ENCODE measurements at regions of chr15 and their contacts with region 1.

Region 1: GRCh38 chr15:91302588-91303439 is 202.8 kb downstream of the SV2B start:
- DNase-seq: peak; percentile 29
- ATAC-seq: peak; percentile 60
- H3K4me3 Mint-ChIP-seq: no peak overlapping the region
- H3K27ac Mint-ChIP-seq: no peak overlapping the region
- H3K4me1 Mint-ChIP-seq: peaks cover 8% of the 10 kb centered on the region
- H3K27me3 Mint-ChIP-seq: peaks cover 6% of the 10 kb centered on the region

Region 2: DNA sequence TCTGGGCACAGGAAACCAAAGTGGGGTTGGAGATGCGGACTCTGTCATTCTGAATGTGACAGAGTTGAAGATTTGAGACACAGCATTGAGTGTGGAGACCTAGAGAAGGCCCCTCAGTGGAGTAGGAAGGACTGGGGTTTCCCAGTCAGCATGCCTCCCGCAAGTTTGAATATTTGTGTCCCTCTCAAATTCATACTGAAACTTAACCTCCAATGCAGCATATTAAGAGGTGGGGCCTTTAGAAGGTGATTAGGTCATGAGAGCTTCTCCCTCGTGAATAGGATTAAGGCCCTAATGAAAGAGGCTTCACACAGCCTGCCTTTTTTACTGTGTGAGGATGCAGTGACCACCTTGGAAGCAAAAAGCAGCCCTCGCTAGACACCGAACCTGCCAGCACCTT is 378.4 kb before region 1 on chr15:
- CTCF ChIA-PET with region 1: no interaction called
- POLR2A ChIA-PET with region 1: no interaction called
- intact Hi-C with region 1: no loop called
- DNase-seq: peak; percentile 41
- ATAC-seq: peak; percentile 72
- H3K4me3 Mint-ChIP-seq: no peak overlapping the region
- H3K27ac Mint-ChIP-seq: peak overlapping the region; percentile 58
- H3K4me1 Mint-ChIP-seq: peaks cover 34% of the 10 kb centered on the region
- H3K27me3 Mint-ChIP-seq: no peaks in the 10 kb centered on the region

Region 3: GRCh38 chr15:91271565-91272153 is 31.2 kb before region 1 on chr15:
- CTCF ChIA-PET with region 1: interaction called, 13 read pairs
- POLR2A ChIA-PET with region 1: no interaction called
- intact Hi-C with region 1: no loop called
- DNase-seq: peak; percentile 74
- ATAC-seq: peak; percentile 64
- H3K4me3 Mint-ChIP-seq: no peak overlapping the region
- H3K27ac Mint-ChIP-seq: no peak overlapping the region
- H3K4me1 Mint-ChIP-seq: peaks cover 2% of the 10 kb centered on the region
- H3K27me3 Mint-ChIP-seq: peaks cover 12% of the 10 kb centered on the region

Region 4: DNA sequence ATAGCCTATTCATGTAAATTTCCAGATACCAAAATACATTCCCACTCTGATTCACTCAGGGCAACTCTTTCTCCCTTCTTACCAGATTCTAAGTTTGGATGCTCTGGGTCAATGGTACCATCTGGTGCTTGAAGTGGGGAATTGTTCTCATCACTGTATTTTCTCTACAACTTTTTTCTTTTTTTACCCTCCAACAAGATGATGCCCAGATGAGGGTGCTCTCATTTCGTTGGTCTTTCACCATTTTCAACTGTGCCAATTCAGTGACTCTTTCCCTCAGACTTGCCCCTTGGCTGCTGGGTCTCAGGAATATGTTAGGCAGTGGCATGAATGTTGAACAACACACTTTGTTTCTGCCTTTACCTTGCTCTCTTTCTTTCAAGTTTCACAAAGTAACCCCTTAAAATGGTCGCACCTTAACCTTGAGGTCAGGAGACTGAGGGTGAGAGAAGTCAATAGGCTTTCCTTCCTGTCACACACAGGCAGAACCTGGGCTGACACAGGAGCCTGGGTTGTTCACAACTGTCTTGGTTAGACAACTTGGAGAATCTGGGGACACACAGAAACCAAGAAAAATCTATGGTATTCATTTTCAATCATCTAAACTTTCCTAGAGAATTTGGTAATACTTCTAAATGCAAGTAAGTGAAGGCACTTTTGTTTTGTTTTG is 220.0 kb after region 1 on chr15:
- CTCF ChIA-PET with region 1: interaction called, 3 read pairs
- POLR2A ChIA-PET with region 1: no interaction called
- intact Hi-C with region 1: loop called (anchors 1 to 10 kb)
- DNase-seq: no peak
- ATAC-seq: no peak
- H3K4me3 Mint-ChIP-seq: no peak overlapping the region
- H3K27ac Mint-ChIP-seq: no peak overlapping the region
- H3K4me1 Mint-ChIP-seq: peaks cover 5% of the 10 kb centered on the region
- H3K27me3 Mint-ChIP-seq: peaks cover 6% of the 10 kb centered on the region

Region 5: DNA sequence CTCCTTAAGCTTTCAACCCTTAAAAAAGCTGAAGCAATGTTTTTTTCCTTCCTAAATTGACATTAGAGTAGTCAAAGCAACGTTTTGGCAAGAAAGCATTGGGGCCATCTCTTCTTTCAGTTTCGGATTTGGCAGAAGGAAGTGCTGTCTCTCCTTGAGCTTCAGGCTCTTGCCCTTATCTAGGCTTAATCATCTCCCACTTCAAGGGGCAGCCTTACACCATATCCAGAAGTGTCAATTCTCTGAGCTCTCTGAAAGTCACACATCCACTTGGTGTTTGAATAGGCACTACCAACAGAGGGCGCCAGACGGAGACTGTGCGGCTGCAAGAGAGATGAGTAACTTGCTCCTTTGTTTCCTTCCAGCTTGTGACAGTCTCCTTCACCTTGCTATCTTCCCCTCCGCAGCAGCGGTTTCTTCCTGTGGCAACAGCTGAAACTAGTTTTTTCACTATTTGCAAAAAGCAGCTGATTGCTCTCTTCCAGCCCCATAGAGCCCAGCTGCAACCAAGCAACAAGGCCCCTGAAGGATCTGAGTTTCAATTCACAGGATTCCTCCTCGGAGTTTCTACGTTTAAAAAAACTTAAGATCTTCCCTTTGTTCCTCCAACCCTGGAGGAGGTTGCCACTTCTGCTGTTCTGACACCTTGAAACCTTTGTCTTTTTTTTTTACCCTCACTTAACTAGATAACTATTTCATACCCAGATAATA is 403.7 kb after region 1 on chr15:
- CTCF ChIA-PET with region 1: interaction called, 17 read pairs
- POLR2A ChIA-PET with region 1: no interaction called
- intact Hi-C with region 1: loop called (anchors 2 to 5 kb)
- DNase-seq: peak; percentile 93
- ATAC-seq: peak; percentile 99
- H3K4me3 Mint-ChIP-seq: peak overlapping the region; percentile 9
- H3K27ac Mint-ChIP-seq: no peak overlapping the region
- H3K4me1 Mint-ChIP-seq: peaks cover 17% of the 10 kb centered on the region
- H3K27me3 Mint-ChIP-seq: peaks cover 12% of the 10 kb centered on the region

Region 6: DNA sequence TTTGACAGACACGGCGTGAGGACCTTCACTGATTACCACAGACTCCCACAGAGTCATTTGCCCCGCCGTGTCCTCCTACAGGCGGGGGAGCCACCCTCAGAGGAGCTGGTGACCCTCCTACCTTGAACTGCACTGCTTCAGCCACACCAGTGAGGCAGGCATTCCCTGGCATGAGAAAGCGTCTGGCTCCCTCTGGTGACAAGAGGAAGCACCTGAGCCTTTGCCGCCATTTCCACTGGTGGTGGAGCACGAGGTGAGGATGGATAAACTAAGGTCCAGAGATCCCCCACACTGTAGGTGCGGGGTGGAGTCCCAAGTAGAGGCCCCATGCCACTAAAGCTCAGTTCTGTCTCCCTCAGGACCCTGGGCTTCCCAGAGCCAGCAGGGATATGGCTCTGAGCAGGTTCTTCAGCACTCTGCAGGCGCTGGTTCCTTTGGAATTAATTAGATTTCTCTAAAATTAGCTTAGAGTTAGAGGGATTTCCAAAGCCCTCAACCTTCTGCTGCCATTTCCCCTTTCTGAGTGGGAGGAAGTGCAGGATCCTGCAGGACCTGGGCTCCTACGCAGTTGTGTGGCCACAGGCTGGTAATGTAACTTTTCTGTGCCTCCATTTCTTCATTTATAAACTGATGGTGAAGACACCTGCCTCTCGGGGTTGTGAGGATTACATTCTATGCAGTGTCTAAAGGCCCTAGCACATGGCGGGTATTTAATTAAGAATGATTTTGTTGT is 774.7 kb after region 1 on chr15:
- CTCF ChIA-PET with region 1: interaction called, 8 read pairs
- POLR2A ChIA-PET with region 1: no interaction called
- intact Hi-C with region 1: loop called (anchors 1 kb)
- DNase-seq: peak; percentile 86
- ATAC-seq: peak; percentile 87
- H3K4me3 Mint-ChIP-seq: no peak overlapping the region
- H3K27ac Mint-ChIP-seq: no peak overlapping the region
- H3K4me1 Mint-ChIP-seq: peaks cover 23% of the 10 kb centered on the region
- H3K27me3 Mint-ChIP-seq: no peaks in the 10 kb centered on the region